Transverse colon (tissue), 4 donors: ENCODE measurements at regions of chr12 and their contacts with region 1.

Region 1: GRCh38 chr12:76611533-76611932 is 52.0 kb upstream of the OSBPL8 start:
- DNase-seq: no peak
- H3K4me3 ChIP-seq: no peak overlapping the region
- H3K27ac ChIP-seq: no peak overlapping the region
- H3K4me1 ChIP-seq: no peaks in the 10 kb centered on the region
- H3K27me3 ChIP-seq: no peaks in the 10 kb centered on the region
- CTCF ChIP-seq: no peak
- EP300 ChIP-seq: no peak
- POLR2A ChIP-seq: no peak

Region 2: DNA sequence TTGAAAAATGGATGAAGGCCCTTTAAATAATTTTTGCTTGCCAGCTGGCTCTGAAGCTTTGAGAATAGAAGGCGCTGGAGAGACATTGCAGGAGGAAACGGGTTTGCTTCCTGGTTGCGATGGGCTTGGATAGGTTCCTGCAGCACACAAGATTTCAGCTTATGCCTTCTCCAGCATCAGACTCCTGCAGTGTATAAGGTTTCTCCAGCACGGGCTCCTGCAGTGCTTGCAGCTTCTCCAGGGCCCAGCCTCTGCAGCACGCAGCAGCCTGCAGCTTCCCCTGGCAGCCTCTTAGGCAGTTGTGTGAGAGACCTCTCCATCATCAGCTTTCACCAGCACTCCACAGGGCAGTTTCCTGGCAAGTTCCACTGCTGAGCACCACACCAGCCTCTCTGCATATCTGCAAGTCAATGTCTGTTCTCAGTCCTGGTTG is 73.7 kb after region 1 on chr12:
- in situ Hi-C with region 1: no loop called
- intact Hi-C with region 1: no loop called
- DNase-seq: peak; percentile 10
- H3K4me3 ChIP-seq: no peak overlapping the region
- H3K27ac ChIP-seq: peak overlapping the region in 1 of 4 donors; percentile 33
- H3K4me1 ChIP-seq: peaks cover 3 to 10% (median 9%) of the 10 kb centered on the region in 4 donors
- H3K27me3 ChIP-seq: no peaks in the 10 kb centered on the region
- CTCF ChIP-seq: no peak
- EP300 ChIP-seq: no peak
- POLR2A ChIP-seq: no peak

Region 3: DNA sequence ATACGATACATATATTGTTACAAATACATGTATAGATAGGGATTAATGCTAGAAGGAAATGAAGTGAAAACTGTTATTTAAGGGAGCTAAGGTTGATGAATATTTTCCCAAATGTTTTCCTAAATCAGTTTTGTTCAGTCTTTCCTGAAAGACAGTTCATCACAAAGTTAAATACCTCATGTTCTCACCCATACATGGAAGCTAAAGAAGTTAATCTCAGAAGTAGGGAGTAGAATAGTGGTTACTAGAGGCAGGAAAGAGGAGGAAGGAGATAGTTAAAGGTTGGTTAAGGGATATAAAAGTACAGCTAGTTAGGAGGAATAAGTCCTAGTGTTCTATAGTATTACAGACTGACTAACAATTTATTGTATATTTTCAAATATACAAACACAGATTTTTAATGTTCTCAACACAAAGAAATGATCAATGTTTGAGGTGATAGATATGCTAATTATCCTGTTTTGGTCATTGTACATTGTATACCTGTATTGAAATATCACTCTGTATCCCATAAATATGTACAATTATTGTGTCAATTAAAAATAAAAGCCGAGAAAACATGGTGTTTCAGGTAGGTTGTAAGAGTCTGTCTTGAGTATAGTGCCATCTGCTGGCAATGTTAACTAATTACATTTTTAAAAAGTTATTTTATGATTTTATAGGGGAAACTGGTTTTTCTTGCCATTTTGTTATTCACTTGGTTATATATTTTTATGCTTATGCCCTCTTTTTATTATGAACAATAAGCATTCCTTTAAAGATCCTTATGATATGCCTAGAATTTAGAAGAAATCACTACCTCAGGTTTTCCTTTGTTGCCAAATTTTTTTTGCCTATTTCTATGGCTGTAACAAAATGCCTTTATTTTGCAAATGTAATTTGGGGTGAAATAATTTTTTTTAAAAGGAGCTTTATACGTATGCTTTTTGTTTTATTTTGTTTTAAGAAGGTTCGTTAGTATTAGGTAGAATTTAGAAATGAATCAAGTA is 179.3 kb after region 1 on chr12:
- in situ Hi-C with region 1: loop called in 3 of 4 experiments (anchors 5 to 10 kb)
- intact Hi-C with region 1: no loop called
- DNase-seq: no peak
- H3K4me3 ChIP-seq: no peak overlapping the region
- H3K27ac ChIP-seq: no peak overlapping the region
- H3K4me1 ChIP-seq: peaks cover 0 to 18% (median 11%) of the 10 kb centered on the region in 4 donors
- H3K27me3 ChIP-seq: no peaks in the 10 kb centered on the region
- CTCF ChIP-seq: peak; percentile 64 to 78 (median 71)
- EP300 ChIP-seq: no peak
- POLR2A ChIP-seq: no peak